ENCODE measurements at regions of chr2 and their contacts with region 1.

Region 1: GRCh38 chr2:100976645-100977391 is 25.3 kb upstream of the RPL31 start:
- DNase-seq: no peak
- H3K4me3 ChIP-seq: no peak overlapping the region
- H3K27ac ChIP-seq: peak overlapping the region; percentile 92 to 93
- H3K4me1 ChIP-seq: peaks cover 0 to 11% of the 10 kb centered on the region in 2 donors
- H3K27me3 ChIP-seq: no peaks in the 10 kb centered on the region
- CTCF ChIP-seq: no peak

Region 2: DNA sequence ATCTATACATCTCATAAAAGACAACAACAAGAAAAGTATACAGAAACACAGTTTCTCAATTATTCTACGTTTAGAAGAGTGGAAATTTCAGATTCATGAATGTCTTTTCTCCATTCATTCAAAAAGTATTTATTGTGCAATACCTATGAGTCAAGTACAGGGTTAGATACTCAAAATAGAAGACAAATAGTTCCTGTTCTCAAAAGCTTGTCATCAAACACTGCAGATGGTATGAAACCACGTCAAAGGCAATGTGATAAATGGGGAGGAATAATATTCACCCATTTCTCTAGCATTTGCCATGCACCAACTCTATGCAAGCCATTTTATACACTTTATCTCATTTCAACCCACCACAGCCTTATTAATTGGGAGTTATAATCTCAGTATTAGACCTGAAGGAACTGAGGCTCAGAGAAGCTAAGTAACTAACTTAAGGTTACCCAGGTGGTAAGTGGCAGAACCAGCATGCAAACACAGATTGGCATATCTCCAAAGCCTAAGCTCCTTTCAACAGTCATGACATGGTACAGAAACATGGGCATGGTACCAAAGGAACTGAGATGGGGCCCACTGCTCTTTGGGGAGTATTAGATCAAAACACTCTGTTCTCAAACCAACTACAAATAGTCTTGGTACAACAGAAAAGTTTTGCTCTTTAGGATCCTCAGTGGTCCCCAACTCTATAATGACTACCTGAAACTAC is 224.0 kb before region 1 on chr2:
- intact Hi-C with region 1: loop called (anchors 5 kb)
- DNase-seq: no peak
- H3K4me3 ChIP-seq: no peak overlapping the region
- H3K27ac ChIP-seq: peak overlapping the region; percentile 49 to 50
- H3K4me1 ChIP-seq: peaks cover 8 to 35% of the 10 kb centered on the region in 2 donors
- H3K27me3 ChIP-seq: no peaks in the 10 kb centered on the region
- CTCF ChIP-seq: no peak

Region 3: DNA sequence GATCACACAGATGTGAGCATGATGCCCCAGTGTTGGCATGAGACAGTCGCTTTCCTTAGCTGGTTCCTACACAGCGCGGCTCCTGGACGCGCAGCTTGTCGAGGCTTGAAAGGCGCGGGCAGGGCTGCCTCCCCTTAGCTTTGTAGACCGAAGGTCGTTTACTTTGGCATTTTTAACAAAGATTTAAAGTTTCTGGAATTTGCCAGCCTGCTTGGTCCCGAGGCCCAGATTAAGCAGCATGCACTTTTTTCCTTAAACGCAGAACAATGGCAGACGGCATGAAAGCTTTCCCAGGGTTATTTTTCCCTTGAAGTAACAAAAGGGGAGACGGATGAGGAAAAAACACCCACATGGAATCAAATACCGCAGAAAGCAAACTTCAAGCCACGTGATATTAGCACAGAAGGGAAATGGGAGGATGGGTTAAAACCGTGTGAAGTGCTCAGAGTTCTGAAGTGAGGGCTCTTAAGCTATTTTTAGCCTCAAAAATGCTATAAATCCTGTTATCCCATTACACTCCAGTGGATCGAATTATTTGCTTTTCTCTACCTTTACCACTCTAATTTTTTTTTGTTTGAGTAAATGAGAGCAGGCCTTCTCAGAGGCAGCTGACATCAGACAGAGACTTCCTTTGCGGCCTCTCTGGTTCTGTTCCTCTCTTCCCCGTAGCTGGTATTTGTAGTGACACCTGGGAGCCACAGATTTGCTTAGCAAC is 101.1 kb before region 1 on chr2:
- intact Hi-C with region 1: loop called (anchors 5 kb)
- DNase-seq: no peak
- H3K4me3 ChIP-seq: peak overlapping the region in 1 of 2 donors; percentile 4
- H3K27ac ChIP-seq: peak overlapping the region; percentile 9 to 64
- H3K4me1 ChIP-seq: peaks cover 7 to 25% of the 10 kb centered on the region in 2 donors
- H3K27me3 ChIP-seq: no peaks in the 10 kb centered on the region
- CTCF ChIP-seq: no peak

Region 4: GRCh38 chr2:100893392-100894089 is 83.3 kb before region 1 on chr2:
- intact Hi-C with region 1: loop called (anchors 5 kb)
- DNase-seq: no peak
- H3K4me3 ChIP-seq: no peak overlapping the region
- H3K27ac ChIP-seq: peak overlapping the region in 1 of 2 donors; percentile 63
- H3K4me1 ChIP-seq: peaks cover 3 to 6% of the 10 kb centered on the region in 2 donors
- H3K27me3 ChIP-seq: no peaks in the 10 kb centered on the region
- CTCF ChIP-seq: no peak

Region 5: DNA sequence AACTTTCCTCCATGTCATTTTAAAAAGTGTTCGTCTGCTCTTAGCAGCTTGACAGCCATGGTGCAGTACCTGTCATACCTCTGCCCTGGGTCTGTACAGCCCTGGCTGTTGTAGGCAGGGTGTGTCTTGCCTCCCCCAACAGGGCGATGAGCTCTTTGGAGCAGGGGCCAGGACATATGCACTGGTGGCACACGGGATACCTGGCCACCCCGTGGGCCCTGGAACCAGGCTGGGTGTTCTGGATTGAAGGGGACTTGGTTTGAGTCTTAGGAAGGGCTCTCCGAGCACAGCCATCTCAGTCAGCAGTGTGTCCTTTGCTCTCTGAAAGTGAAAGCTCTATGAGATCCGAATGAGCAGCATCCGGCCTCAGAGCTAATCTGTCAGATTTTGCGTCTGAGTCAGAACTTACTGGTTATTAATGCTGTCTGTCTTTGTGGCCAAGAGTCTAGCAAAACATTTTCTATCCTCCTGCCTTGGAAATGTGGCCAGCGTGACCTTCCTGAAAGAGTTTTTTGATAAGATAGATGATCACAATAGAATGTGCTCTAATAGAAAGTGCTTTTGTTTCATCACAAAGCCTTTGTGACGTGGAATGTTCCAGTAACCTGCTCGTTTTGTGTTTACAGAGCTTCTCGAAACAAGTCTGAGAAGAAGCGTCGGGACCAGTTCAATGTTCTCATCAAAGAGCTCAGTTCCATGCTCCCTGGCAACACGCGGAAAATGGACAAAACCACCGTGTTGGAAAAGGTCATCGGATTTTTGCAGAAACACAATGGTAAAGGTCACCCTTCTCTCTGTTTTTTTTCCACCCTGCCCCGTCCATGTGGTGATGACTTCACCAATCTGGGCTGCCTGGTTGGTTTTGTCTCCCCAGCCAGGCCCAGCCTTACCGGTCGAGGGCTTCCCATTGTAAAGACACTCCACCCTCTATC is 52.0 kb before region 1 on chr2:
- intact Hi-C with region 1: loop called (anchors 5 kb)
- DNase-seq: peak in 1 of 2 donors; percentile 71
- H3K4me3 ChIP-seq: peak overlapping the region; percentile 41 to 58
- H3K27ac ChIP-seq: peak overlapping the region; percentile 86 to 90
- H3K4me1 ChIP-seq: peaks cover 5 to 11% of the 10 kb centered on the region in 2 donors
- H3K27me3 ChIP-seq: no peaks in the 10 kb centered on the region
- CTCF ChIP-seq: no peak

Region 6: DNA sequence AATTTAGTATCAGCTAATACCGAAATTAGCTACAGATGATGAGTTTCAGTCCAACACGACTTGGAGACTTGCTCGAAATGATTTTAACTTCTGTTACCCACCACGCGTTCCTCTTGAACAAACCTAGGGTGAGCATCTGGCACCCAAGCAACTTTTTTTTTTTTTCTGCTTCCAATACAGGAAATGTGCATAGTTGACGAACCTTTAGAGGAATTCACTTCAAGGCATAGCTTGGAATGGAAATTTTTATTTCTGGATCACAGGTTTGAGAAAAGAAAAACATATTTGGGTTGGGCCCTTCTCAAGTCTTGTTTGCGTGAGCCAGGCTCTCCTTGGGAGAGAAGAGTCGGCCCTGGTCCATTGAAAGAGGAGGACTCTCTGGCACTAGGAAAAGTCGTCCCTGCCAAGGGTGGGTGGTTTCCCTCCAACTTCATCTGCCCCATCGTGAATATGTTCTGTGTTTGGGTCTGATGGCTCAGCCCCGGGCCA is 12.1 kb before region 1 on chr2:
- intact Hi-C with region 1: loop called (anchors 2 kb)
- DNase-seq: no peak
- H3K4me3 ChIP-seq: no peak overlapping the region
- H3K27ac ChIP-seq: peak overlapping the region; percentile 70 to 73
- H3K4me1 ChIP-seq: peaks cover 6 to 17% of the 10 kb centered on the region in 2 donors
- H3K27me3 ChIP-seq: no peaks in the 10 kb centered on the region
- CTCF ChIP-seq: no peak